Ascending aorta (tissue), 2 donors: ENCODE measurements at regions of chr3 and their contacts with region 1.

Region 1: GRCh38 chr3:10192953-10193691 is 28.4 kb downstream of the IRAK2 start:
- DNase-seq: peak in 1 of 2 donors; percentile 82
- H3K4me3 ChIP-seq: no peak overlapping the region
- H3K27ac ChIP-seq: peak overlapping the region; percentile 84 to 94
- H3K4me1 ChIP-seq: peaks cover 37 to 74% of the 10 kb centered on the region in 2 donors
- H3K27me3 ChIP-seq: no peaks in the 10 kb centered on the region
- CTCF ChIP-seq: peak in 2 of 3 experiments; percentile 34 to 39

Region 2: GRCh38 chr3:9902372-9903237 is 290.5 kb before region 1 on chr3 and contains the start of gene IL17RE:
- intact Hi-C with region 1: no loop called
- DNase-seq: peak in 1 of 2 donors; percentile 71
- H3K4me3 ChIP-seq: peak within 1 kb of the TSS in 1 of 2 donors; percentile 60
- H3K27ac ChIP-seq: peak within 1 kb of the TSS; percentile 82 to 84
- H3K4me1 ChIP-seq: peaks cover 0 to 6% of the 10 kb centered on the region in 2 donors
- H3K27me3 ChIP-seq: no peaks in the 10 kb centered on the region
- CTCF ChIP-seq: no peak
- total RNA-seq, gene IL17RE: 21.7 TPM

Region 3: DNA sequence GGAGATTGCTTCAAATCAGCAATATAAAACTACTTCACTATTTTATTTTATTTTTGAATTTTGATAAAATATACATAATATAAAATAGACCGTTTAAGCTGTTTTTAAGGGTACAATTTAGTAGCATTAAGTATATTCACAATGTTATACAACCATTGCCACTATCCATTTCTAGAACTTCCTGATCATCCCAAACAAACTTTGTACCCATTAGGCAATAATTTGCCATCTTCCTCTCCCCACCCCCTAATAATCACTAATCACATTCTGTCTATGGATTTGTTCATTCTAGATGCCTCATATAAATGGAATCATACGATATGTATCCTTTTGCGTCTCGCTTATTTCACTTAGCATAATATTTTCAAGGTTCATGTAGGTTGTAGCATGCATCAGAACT is 138.0 kb before region 1 on chr3:
- intact Hi-C with region 1: no loop called
- DNase-seq: no peak
- H3K4me3 ChIP-seq: no peak overlapping the region
- H3K27ac ChIP-seq: no peak overlapping the region
- H3K4me1 ChIP-seq: no peaks in the 10 kb centered on the region
- H3K27me3 ChIP-seq: no peaks in the 10 kb centered on the region
- CTCF ChIP-seq: no peak

Region 4: GRCh38 chr3:10173926-10174435 is 19.1 kb before region 1 on chr3:
- intact Hi-C with region 1: loop called (anchors 1 kb)
- DNase-seq: peak; percentile 96 to 98
- H3K4me3 ChIP-seq: peak overlapping the region in 1 of 2 donors; percentile 39
- H3K27ac ChIP-seq: peak overlapping the region; percentile 93 to 94
- H3K4me1 ChIP-seq: peaks cover 2 to 17% of the 10 kb centered on the region in 2 donors
- H3K27me3 ChIP-seq: no peaks in the 10 kb centered on the region
- CTCF ChIP-seq: no peak

Region 5: DNA sequence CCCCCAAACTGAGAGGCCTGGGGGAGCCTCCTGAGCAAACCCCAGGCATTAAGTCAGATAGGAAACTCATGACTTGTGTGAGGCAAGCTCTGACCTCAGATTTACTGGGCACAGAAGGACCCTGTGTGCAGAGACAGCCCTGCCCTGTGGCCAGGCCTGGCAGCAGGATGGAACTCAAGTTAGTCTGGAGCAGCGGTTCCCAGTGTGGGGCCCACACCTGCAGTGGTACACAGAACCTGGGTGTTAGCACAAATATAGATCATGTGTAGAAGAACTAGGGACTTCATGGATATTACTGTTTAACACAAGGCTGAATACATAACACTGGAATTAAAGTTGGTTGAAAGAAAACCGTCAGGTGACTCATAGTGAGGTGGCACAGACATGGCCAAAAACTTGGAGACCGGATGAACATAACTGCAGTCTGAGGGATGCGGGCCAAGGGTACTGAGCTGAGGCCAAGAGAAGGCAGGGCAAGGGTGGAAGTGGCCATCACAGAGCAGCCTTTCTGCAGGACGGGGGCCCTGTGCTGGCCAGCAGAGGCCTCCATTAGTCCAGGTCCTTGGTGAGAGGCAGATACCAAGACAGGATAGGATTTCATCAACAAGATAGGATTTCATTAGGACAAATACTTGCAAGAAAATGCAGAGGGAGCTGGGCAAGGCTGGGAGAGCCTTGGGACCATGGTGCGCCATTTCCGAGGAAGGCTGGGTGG is 12.5 kb after region 1 on chr3:
- intact Hi-C with region 1: loop called (anchors 2 kb)
- DNase-seq: peak; percentile 68 to 93
- H3K4me3 ChIP-seq: no peak overlapping the region
- H3K27ac ChIP-seq: peak overlapping the region; percentile 90 to 92
- H3K4me1 ChIP-seq: peaks cover 16 to 35% of the 10 kb centered on the region in 2 donors
- H3K27me3 ChIP-seq: no peaks in the 10 kb centered on the region
- CTCF ChIP-seq: no peak